ENCODE measurements at regions of chr6 and their contacts with region 1.

Region 1: DNA sequence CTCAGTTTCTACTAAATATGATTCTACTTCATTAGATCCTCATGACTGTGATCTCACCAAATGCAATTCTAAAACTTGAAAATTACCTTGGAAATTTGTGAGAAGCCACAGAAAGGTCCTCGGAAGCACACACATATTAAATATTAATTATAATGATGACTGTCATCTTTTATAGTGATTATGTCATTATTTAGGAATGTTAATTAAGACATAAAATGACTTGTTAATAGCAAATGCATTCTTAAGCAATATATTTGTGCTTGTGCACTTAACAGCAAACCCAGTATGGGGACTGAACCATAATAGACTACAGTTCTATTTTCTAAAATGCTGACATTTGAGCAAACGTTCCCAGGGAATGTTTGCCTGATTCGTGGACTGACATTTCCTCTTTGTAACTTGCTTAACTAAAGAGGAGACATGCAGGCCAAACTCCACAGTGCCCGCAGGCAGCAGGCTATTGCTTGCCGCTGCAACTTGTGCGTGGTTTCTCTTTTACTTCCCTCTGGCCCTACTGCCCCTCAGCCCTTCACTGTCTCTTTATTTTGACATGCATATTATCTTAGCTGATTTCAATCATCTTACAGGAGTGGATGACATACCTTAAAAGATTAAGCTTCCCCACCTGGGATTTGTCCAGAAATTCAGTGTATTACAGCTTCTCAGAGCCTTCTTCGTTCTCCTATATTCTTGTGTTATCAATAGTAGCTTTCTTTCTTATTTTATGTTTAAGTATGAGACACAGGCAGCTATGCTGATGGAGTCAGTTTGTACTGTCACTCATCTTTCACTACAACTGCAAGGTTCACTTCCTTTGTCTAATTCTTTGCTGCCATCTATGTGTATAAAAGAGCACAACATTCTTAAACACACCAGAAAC is 141.5 kb downstream of the GMDS start:
- DNase-seq: no peak
- H3K4me3 Mint-ChIP-seq: no peak overlapping the region
- H3K27ac Mint-ChIP-seq: no peak overlapping the region
- H3K4me1 Mint-ChIP-seq: peaks cover 1% of the 10 kb centered on the region
- H3K27me3 Mint-ChIP-seq: peaks cover 3% of the 10 kb centered on the region

Region 2: DNA sequence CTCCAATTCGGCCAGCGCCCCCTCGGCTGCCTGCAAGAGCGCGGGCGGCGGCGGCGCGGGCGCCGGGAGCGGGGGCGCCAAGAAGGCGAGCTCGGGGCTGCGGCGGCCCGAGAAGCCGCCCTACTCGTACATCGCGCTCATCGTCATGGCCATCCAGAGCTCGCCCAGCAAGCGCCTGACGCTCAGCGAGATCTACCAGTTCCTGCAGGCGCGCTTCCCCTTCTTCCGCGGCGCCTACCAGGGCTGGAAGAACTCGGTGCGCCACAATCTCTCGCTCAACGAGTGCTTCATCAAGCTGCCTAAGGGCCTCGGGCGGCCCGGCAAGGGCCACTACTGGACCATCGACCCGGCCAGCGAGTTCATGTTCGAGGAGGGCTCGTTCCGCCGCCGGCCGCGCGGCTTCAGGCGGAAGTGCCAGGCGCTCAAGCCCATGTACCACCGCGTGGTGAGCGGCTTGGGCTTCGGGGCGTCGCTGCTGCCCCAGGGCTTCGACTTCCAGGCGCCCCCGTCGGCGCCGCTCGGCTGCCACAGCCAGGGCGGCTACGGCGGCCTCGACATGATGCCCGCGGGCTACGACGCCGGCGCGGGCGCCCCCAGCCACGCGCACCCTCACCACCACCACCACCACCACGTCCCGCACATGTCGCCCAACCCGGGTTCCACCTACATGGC is 713.6 kb before region 1 on chr6:
- intact Hi-C with region 1: loop called (anchors 5 kb)
- DNase-seq: no peak
- H3K4me3 Mint-ChIP-seq: peak overlapping the region; percentile 39
- H3K27ac Mint-ChIP-seq: no peak overlapping the region
- H3K4me1 Mint-ChIP-seq: peaks cover 15% of the 10 kb centered on the region
- H3K27me3 Mint-ChIP-seq: peaks cover 76% of the 10 kb centered on the region

Region 3: GRCh38 chr6:1604158-1605030 is 499.5 kb before region 1 on chr6:
- intact Hi-C with region 1: loop called (anchors 1 kb)
- DNase-seq: peak; percentile 40
- H3K4me3 Mint-ChIP-seq: no peak overlapping the region
- H3K27ac Mint-ChIP-seq: no peak overlapping the region
- H3K4me1 Mint-ChIP-seq: peaks cover 10% of the 10 kb centered on the region
- H3K27me3 Mint-ChIP-seq: peaks cover 82% of the 10 kb centered on the region

Region 4: DNA sequence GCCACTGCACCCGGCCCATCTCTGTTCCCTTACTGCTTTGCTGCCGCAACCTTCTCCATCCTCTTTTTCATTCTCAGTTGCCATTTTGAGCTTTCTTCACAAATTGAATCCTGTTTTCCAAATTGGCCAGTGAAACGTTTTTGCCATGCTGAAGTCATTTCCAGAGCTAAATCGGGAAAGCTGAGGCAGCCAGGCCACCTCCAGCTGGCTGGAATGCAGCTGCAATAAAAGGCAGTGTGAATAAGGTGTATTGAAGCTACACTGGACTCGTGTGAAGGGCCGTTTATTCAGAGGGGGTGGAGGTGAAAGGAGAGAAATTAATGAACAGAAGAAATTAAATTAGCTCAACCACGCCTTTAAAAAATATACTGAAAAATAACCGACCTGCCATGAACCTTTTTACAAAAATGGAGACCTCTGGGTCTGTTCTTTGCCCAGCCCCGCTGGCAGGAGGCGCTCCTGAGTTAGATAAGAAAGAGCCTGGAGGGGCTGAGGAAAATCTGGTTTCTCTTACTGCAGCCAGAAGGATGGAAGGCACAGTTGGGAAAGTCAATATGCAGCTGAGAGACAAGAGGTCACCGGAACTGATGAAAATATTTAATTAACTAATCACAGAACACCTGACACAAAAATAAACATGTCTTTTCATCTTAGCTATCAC is 210.3 kb before region 1 on chr6:
- intact Hi-C with region 1: loop called (anchors 5 kb)
- DNase-seq: no peak
- H3K4me3 Mint-ChIP-seq: no peak overlapping the region
- H3K27ac Mint-ChIP-seq: no peak overlapping the region
- H3K4me1 Mint-ChIP-seq: peaks cover 8% of the 10 kb centered on the region
- H3K27me3 Mint-ChIP-seq: no peaks in the 10 kb centered on the region

Measured in activated T-helper 2 cell treated with anti-CD3 and anti-CD28 coated beads, Interferon-gamma antibody, Interleukin-2, Interleukin-4, amounts not matched to agents 10 μg/mL and 5 μg/mL and 100 μg/mL, durations not matched to agents 14 hours and 24 hours and 36 hours (primary cell).